ENCODE measurements at regions of chr4 and their contacts with region 1.

Region 1: GRCh38 chr4:674172-675035 is at the starts of genes ATP5ME and MYL5:
- DNase-seq: peak; percentile 96 to 99 (median 97)
- ATAC-seq: peak; percentile 78 to 90 (median 88)
- H3K4me3 ChIP-seq: peak within 1 kb of the TSS; percentile 56 to 99 (median 90)
- H3K27ac ChIP-seq: peak within 1 kb of the TSS; percentile 83 to 98 (median 93)
- H3K4me1 ChIP-seq: peaks cover 6 to 30% (median 17%) of the 10 kb centered on the region in 12 donors
- H3K27me3 ChIP-seq: no peaks in the 10 kb centered on the region
- CTCF ChIP-seq: peak; percentile 88 to 98 (median 96)
- POLR2A ChIP-seq: peak in 1 of 2 donors; percentile 92
- total RNA-seq, gene ATP5ME: 210 to 906 (median 800) TPM
- total RNA-seq, gene MYL5: 1.4 to 12.9 (median 5.6) TPM

Region 2: DNA sequence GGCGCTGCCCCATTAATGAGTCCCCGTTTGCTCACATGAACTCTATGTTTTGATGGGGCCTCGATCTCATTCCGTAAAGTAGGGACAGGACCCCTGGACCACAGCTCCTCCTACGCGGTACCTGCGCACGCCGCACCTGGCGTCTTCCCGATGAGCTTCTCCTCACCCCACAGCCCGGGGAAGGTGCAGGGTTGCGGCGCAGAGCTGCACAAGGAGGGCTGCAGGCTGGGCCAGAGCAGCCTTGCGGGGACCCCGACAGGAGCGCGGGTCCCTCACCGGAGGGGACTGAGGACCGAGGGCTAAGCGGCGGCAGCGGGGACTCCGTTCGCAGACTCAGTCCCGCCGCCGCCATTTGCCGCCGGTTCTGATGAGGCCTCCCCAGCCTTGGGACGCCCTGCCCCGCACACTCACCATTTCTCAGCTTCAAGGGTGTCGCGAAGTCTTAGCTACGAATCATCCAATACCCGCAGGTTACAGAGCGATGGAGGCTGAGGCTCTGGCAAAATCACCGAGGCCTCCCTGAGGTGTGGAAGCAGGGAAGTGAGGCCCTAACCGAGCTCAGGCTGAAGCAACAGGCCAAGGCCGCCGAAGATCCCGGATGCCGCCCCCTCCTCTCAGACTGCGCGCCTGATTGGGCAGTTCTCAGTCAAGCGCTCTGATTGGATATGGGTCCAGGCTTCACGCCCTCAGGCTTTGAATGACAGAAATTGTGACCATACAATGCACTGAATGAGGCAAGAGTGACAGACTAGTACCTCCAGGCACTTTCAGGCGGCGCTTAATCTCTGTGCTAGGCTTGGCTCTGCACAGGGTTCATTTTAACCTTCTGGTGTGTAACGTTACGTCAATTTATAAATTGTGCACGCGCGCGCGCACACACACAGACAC is 200.6 kb before region 1 on chr4:
- intact Hi-C with region 1: loop called in 1 of 10 experiments (anchors 10 kb)
- DNase-seq: peak; percentile 95 to 97 (median 96)
- ATAC-seq: peak; percentile 99 to 100 (median 100)
- H3K4me3 ChIP-seq: peak overlapping the region; percentile 83 to 98 (median 94)
- H3K27ac ChIP-seq: peak overlapping the region; percentile 51 to 93 (median 90)
- H3K4me1 ChIP-seq: peaks cover 0 to 20% (median 10%) of the 10 kb centered on the region in 12 donors
- H3K27me3 ChIP-seq: no peaks in the 10 kb centered on the region
- CTCF ChIP-seq: peak in 1 of 12 donors; percentile 2
- POLR2A ChIP-seq: peak; percentile 22 to 77

Region 3: GRCh38 chr4:705278-706082 is 31.1 kb after region 1 on chr4 and contains the start of gene PCGF3:
- intact Hi-C with region 1: loop called in 1 of 10 experiments (anchors 1 kb)
- DNase-seq: peak; percentile 97 to 99 (median 98)
- ATAC-seq: peak; percentile 97 to 99 (median 98)
- H3K4me3 ChIP-seq: peak within 1 kb of the TSS; percentile 66 to 99 (median 90)
- H3K27ac ChIP-seq: peak within 1 kb of the TSS; percentile 28 to 97 (median 84)
- H3K4me1 ChIP-seq: peaks cover 5 to 36% (median 19%) of the 10 kb centered on the region in 12 donors
- H3K27me3 ChIP-seq: no peaks in the 10 kb centered on the region
- CTCF ChIP-seq: no peak
- POLR2A ChIP-seq: peak in 1 of 2 donors; percentile 82
- total RNA-seq, gene PCGF3: 16.2 to 45.7 (median 21.8) TPM